ENCODE measurements at regions of chr2 and their contacts with region 1.

Region 1: DNA sequence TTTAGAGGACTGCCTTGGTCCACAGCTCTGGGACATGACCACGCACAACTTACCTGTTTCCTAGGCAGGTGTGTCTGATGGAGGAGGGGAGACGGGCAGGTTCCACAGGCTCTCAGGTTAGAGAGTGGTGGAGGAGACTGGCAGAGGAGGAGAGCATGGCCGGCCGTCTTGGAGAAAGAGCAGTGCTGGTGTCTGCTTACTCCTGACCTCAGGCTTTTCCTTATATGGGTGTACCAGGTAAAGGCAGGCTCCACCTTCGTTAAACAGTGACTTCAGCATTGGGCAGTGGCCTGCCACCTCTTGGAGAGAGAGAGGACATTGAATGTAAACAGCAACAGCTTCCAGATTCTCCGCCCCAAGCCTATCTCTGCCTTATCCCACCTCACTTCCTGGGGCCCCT is at the start of gene CAPN13:
- DNase-seq: no peak
- ATAC-seq: no peak
- H3K4me3 ChIP-seq: no peak within 1 kb of the TSS
- H3K4me3 Mint-ChIP-seq: no peak within 1 kb of the TSS
- H3K27ac ChIP-seq: no peak within 1 kb of the TSS
- H3K27ac Mint-ChIP-seq: no peak within 1 kb of the TSS
- H3K4me1 ChIP-seq: no peaks in the 10 kb centered on the region
- H3K4me1 Mint-ChIP-seq: no peaks in the 10 kb centered on the region
- H3K27me3 ChIP-seq: peaks cover 0 to 2% of the 10 kb centered on the region in 2 experiments
- H3K27me3 Mint-ChIP-seq: peaks cover 13% of the 10 kb centered on the region
- CTCF ChIP-seq: no peak
- total RNA-seq, gene CAPN13: not detected

Region 2: DNA sequence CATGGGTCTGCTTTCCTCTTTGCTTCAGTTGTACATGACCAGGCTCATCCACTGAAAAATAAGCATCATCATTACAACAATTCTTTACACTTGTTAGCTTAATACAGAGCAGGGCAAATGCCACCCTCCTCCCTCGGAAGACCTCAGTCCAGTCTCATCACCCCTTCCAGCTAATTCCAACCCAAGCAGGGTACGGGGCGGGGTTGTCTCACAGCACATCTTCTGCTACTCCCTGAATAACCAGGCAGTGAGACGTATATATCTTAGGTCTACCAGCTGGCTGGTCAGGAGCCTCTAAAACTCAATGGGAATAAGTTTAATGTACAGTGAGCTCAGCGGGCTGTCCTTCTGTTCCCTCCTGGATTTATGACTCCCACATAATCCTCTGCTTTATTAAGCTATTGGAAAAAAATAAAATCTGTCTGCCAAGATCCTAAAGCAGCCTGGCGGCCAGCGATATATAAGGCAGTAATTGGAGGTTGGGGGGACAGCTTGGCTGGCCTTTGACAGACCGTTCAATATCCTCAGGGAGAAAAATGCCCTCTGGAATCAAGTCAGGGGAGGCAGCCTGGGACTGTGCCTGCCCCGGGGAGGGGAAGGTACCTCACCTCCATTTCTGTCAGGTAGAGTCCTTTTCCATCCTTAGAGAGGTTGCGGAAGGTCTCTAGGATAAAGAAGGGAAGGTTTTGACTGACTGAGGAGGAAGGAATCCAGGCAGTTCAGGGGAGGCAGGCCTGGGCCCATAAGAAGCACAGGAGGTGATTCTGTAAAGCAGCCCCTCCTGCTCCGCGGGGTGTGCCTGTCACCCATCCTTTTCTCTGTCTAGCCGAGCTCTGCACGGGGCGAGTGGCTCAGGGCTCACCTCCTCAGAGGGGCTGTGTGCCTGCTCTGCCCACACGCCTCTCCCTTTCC is 76.3 kb before region 1 on chr2:
- CTCF ChIA-PET with region 1: no interaction called
- POLR2A ChIA-PET with region 1: no interaction called
- intact Hi-C with region 1: loop called in 1 of 2 experiments (anchors 2 kb)
- DNase-seq: no peak
- ATAC-seq: no peak
- H3K4me3 ChIP-seq: no peak overlapping the region
- H3K4me3 Mint-ChIP-seq: no peak overlapping the region
- H3K27ac ChIP-seq: no peak overlapping the region
- H3K27ac Mint-ChIP-seq: no peak overlapping the region
- H3K4me1 ChIP-seq: no peaks in the 10 kb centered on the region
- H3K4me1 Mint-ChIP-seq: no peaks in the 10 kb centered on the region
- H3K27me3 ChIP-seq: no peaks in the 10 kb centered on the region
- H3K27me3 Mint-ChIP-seq: peaks cover 8% of the 10 kb centered on the region
- CTCF ChIP-seq: no peak